ENCODE measurements at regions of chr1 and their contacts with region 1.

Region 1: GRCh38 chr1:87718241-87718950 is 389.7 kb downstream of the LMO4 start:
- DNase-seq: peak; percentile 38
- ATAC-seq: peak; percentile 72
- H3K4me3 ChIP-seq: no peak overlapping the region
- H3K27ac ChIP-seq: no peak overlapping the region
- H3K4me1 ChIP-seq: peaks cover 16% of the 10 kb centered on the region; the same call in 1 of the 2 replicates
- H3K27me3 ChIP-seq: no peaks in the 10 kb centered on the region
- CTCF ChIP-seq: no peak

Region 2: GRCh38 chr1:87508247-87508787 is 210.1 kb before region 1 on chr1:
- CTCF ChIA-PET with region 1: no interaction called
- POLR2A ChIA-PET with region 1: no interaction called
- intact Hi-C with region 1: loop called (anchors 5 kb)
- DNase-seq: no peak
- ATAC-seq: peak; percentile 57
- H3K4me3 ChIP-seq: no peak overlapping the region
- H3K27ac ChIP-seq: no peak overlapping the region
- H3K4me1 ChIP-seq: no peaks in the 10 kb centered on the region; the same call in 1 of the 2 replicates
- H3K27me3 ChIP-seq: no peaks in the 10 kb centered on the region
- CTCF ChIP-seq: no peak

Region 3: DNA sequence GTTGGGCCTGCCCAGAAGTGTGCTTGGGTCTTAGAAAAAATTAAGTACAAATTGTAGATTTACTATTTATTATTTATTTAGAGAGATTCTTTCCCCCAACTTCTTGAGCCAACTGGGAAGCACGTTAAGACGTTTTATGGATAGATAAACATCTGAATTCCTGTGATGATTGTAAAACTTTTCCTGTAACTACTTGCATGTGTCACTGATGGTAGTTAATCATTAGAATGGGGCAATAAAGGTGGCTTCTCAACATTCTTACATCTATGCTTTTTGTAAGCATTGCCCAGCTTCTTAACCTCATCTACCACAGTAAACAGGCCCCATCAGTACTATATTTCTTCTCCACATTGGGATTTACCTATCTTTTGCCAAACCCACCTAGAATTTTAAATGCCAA is 170.1 kb after region 1 on chr1:
- CTCF ChIA-PET with region 1: no interaction called
- POLR2A ChIA-PET with region 1: no interaction called
- intact Hi-C with region 1: loop called (anchors 5 kb)
- DNase-seq: peak; percentile 63
- ATAC-seq: peak; percentile 79
- H3K4me3 ChIP-seq: no peak overlapping the region
- H3K27ac ChIP-seq: peak overlapping the region; percentile 18; the same call in 1 of the 2 replicates
- H3K4me1 ChIP-seq: peaks cover 16% of the 10 kb centered on the region
- H3K27me3 ChIP-seq: no peaks in the 10 kb centered on the region
- CTCF ChIP-seq: no peak

Measured in PC-3 (cell line).